Right cardiac atrium (tissue), 5 donors: ENCODE measurements at regions of chr1 and their contacts with region 1.

Region 1: DNA sequence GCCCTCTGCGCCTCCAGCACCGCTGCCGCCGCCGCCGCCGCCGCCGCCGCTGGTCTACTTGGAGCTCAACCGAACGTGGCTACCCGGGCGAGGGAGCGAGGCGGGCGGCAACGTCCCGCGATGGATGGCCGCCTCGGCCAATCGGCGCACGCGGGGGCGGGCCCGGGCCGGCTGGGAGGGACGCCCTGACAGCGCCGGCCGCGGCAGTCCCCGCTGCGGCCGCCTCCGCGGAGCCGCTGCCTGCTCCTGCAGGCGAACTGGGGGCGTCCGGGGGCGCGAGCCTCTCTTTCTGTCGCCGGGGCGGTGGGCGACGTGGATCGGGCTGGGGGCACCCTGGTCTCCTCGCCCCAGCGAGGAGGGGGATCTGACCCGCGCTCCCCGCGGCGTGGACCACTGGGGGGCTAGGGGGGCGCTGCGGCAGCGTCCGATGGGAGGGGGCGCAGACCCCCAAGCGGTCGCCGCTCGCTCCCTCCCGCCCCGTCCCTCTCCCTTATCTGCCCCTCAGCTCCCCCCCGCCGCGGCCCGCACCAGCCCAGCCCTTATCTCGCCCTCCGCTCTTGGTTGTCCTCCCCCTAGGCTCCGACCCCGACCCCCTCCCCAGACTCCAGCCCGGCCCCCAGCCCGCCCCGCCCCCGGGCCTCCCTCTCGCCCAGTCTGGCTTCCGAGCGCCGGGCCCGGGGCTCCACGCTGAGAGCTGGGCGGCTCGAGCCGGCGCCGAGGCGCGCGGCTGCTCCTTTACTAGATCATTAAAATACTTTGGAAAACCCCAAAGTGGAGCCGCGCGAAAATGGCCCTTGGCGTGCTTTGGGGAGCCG is at the start of gene SSBP3:
- DNase-seq: peak; percentile 93 to 97 (median 97)
- ATAC-seq: peak; percentile 94
- H3K4me3 ChIP-seq: peak within 1 kb of the TSS; percentile 88
- H3K27ac ChIP-seq: peak within 1 kb of the TSS; percentile 94
- H3K4me1 ChIP-seq: peaks cover 8% of the 10 kb centered on the region
- H3K27me3 ChIP-seq: no peaks in the 10 kb centered on the region
- total RNA-seq, gene SSBP3: 25.4 to 55.8 (median 35.8) TPM

Region 2: DNA sequence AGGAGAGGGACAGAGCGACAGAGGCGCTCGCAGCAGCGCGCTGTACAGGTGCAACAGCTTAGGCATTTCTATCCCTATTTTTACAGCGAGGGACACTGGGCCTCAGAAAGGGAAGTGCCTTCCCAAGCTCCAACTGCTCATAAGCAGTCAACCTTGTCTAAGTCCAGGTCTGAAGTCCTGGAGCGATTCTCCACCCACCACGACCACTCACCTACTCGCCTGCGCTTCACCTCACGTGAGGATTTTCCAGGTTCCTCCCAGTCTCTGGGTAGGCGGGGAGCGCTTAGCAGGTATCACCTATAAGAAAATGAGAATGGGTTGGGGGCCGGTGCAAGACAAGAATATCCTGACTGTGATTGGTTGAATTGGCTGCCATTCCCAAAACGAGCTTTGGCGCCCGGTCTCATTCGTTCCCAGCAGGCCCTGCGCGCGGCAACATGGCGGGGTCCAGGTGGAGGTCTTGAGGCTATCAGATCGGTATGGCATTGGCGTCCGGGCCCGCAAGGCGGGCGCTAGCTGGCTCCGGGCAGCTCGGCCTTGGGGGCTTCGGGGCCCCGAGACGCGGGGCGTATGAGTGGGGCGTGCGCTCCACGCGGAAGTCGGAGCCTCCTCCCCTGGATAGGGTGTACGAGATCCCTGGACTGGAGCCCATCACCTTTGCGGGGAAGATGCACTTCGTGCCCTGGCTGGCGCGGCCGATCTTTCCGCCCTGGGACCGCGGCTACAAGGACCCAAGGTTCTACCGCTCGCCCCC is 206.6 kb before region 1 on chr1 and contains the starts of genes CYB5RL and MRPL37:
- intact Hi-C with region 1: loop called in 2 of 4 experiments (anchors 10 kb)
- DNase-seq: peak; percentile 88 to 95 (median 93)
- ATAC-seq: peak; percentile 99
- H3K4me3 ChIP-seq: peak within 1 kb of the TSS; percentile 51
- H3K27ac ChIP-seq: peak within 1 kb of the TSS; percentile 1
- H3K4me1 ChIP-seq: peaks cover 2% of the 10 kb centered on the region
- H3K27me3 ChIP-seq: no peaks in the 10 kb centered on the region
- total RNA-seq, gene CYB5RL: 3.0 to 6.4 (median 5.5) TPM
- total RNA-seq, gene MRPL37: 53.1 to 57.1 (median 55.7) TPM

Region 3: GRCh38 chr1:54310439-54311328 is 95.9 kb before region 1 on chr1:
- intact Hi-C with region 1: loop called in 2 of 4 experiments (anchors 5 to 10 kb)
- DNase-seq: peak; percentile 47 to 78 (median 76)
- ATAC-seq: peak in 1 of 2 donors; percentile 47
- H3K4me3 ChIP-seq: no peak overlapping the region
- H3K27ac ChIP-seq: no peak overlapping the region
- H3K4me1 ChIP-seq: peaks cover 15% of the 10 kb centered on the region
- H3K27me3 ChIP-seq: no peaks in the 10 kb centered on the region

Region 4: GRCh38 chr1:54335755-54336108 is 70.8 kb before region 1 on chr1:
- intact Hi-C with region 1: loop called in 1 of 4 experiments (anchors 10 kb)
- DNase-seq: peak; percentile 78 to 86 (median 80)
- ATAC-seq: peak; percentile 83 to 91
- H3K4me3 ChIP-seq: no peak overlapping the region
- H3K27ac ChIP-seq: peak overlapping the region; percentile 71
- H3K4me1 ChIP-seq: peaks cover 39% of the 10 kb centered on the region
- H3K27me3 ChIP-seq: no peaks in the 10 kb centered on the region